ENCODE measurements at regions of chr2 and their contacts with region 1.

Region 1: GRCh38 chr2:136378712-136379595 is 261.0 kb upstream of the CXCR4 start:
- DNase-seq: peak; percentile 34 to 50 (median 38)
- ATAC-seq: peak; percentile 92
- H3K4me3 ChIP-seq: no peak overlapping the region
- H3K27ac ChIP-seq: no peak overlapping the region
- H3K4me1 ChIP-seq: no peaks in the 10 kb centered on the region
- H3K27me3 ChIP-seq: peaks cover 0 to 4% of the 10 kb centered on the region in 2 experiments; a peak in 1 of 5 replicates
- CTCF ChIP-seq: peak; percentile 52 to 67 (median 64)
- EP300 ChIP-seq: no peak
- POLR2A ChIP-seq: no peak
- RAD21 ChIP-seq: peak; percentile 73 to 82

Region 2: DNA sequence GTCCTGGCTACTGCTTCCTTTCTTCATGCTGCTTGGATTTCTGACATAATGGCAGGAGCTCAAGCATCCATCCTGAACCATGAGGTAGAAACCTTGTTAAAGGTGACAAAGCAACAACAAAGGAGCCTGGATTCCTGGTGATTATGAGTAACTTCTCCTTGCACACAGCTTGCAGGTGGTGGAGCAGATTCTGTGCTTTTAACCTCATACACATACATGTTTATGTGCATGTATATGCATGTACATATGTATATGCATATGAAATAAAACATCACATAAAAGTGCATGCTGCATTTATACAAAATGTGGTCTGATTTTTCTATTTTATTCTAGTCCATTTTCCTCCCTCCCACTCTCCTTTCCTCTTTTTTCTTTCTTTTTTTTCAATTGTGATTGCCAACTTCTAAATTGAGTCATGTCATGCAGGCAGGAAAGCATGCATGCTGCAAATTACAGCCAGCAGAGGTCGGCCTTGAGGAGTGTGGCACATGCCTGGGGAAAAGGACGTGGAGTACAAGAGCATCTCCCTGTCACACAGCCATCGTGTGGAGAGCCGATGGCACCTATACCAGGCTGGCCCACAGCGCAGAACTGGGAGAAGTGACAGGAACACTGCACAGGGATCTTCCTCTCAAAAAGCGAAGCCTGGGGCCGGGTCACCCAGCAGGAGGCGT is 559.9 kb before region 1 on chr2:
- CTCF ChIA-PET with region 1: no interaction called
- POLR2A ChIA-PET with region 1: no interaction called
- in situ Hi-C with region 1: no loop called
- intact Hi-C with region 1: loop called (anchors 5 kb)
- DNase-seq: peak; percentile 36 to 48 (median 42)
- ATAC-seq: peak; percentile 91
- H3K4me3 ChIP-seq: no peak overlapping the region
- H3K27ac ChIP-seq: no peak overlapping the region
- H3K4me1 ChIP-seq: no peaks in the 10 kb centered on the region
- H3K27me3 ChIP-seq: peaks cover 46 to 64% of the 10 kb centered on the region in 2 experiments
- CTCF ChIP-seq: peak; percentile 65 to 73 (median 67)
- EP300 ChIP-seq: no peak
- POLR2A ChIP-seq: no peak
- RAD21 ChIP-seq: peak in 1 of 2 experiments; percentile 67; a peak in 2 of 4 replicates

Region 3: GRCh38 chr2:136327162-136327852 is 51.6 kb before region 1 on chr2:
- CTCF ChIA-PET with region 1: no interaction called
- POLR2A ChIA-PET with region 1: no interaction called
- in situ Hi-C with region 1: no loop called
- intact Hi-C with region 1: no loop called
- DNase-seq: peak; percentile 15 to 29 (median 20)
- ATAC-seq: peak; percentile 68
- H3K4me3 ChIP-seq: no peak overlapping the region
- H3K27ac ChIP-seq: no peak overlapping the region
- H3K4me1 ChIP-seq: no peaks in the 10 kb centered on the region; a peak in 1 of 5 replicates
- H3K27me3 ChIP-seq: peaks cover 3 to 21% of the 10 kb centered on the region in 2 experiments; a peak in 3 of 5 replicates
- CTCF ChIP-seq: no peak
- EP300 ChIP-seq: peak; percentile 7; the same call in 1 of the 2 replicates
- POLR2A ChIP-seq: no peak
- RAD21 ChIP-seq: no peak

Measured in K562 (cell line).